WTC11 (cell line): ENCODE measurements at regions of chr17 and their contacts with region 1.

Region 1: GRCh38 chr17:2094891-2095535 is 40.1 kb downstream of the HIC1 start:
- DNase-seq: peak; percentile 35
- ATAC-seq: peak; percentile 46
- H3K4me3 Mint-ChIP-seq: no peak overlapping the region
- H3K27ac Mint-ChIP-seq: peak overlapping the region; percentile 77
- H3K4me1 Mint-ChIP-seq: peaks cover 30% of the 10 kb centered on the region
- H3K27me3 Mint-ChIP-seq: no peaks in the 10 kb centered on the region
- CTCF ChIP-seq: no peak

Region 2: GRCh38 chr17:1783834-1784611 is 311.0 kb before region 1 on chr17:
- CTCF ChIA-PET with region 1: no interaction called
- POLR2A ChIA-PET with region 1: no interaction called
- DNase-seq: no peak
- ATAC-seq: peak; percentile 86
- H3K4me3 Mint-ChIP-seq: no peak overlapping the region
- H3K27ac Mint-ChIP-seq: peak overlapping the region; percentile 69
- H3K4me1 Mint-ChIP-seq: no peaks in the 10 kb centered on the region
- H3K27me3 Mint-ChIP-seq: no peaks in the 10 kb centered on the region
- CTCF ChIP-seq: 0 out of 2 replicates have a peak, but pooled peaks have one; percentile 15

Region 3: GRCh38 chr17:1989135-1989534 is 105.9 kb before region 1 on chr17:
- CTCF ChIA-PET with region 1: no interaction called
- POLR2A ChIA-PET with region 1: no interaction called
- DNase-seq: no peak
- ATAC-seq: no peak
- H3K4me3 Mint-ChIP-seq: no peak overlapping the region
- H3K27ac Mint-ChIP-seq: no peak overlapping the region
- H3K4me1 Mint-ChIP-seq: peaks cover 10% of the 10 kb centered on the region
- H3K27me3 Mint-ChIP-seq: no peaks in the 10 kb centered on the region; the same call in 1 of the 2 replicates
- CTCF ChIP-seq: no peak

Region 4: DNA sequence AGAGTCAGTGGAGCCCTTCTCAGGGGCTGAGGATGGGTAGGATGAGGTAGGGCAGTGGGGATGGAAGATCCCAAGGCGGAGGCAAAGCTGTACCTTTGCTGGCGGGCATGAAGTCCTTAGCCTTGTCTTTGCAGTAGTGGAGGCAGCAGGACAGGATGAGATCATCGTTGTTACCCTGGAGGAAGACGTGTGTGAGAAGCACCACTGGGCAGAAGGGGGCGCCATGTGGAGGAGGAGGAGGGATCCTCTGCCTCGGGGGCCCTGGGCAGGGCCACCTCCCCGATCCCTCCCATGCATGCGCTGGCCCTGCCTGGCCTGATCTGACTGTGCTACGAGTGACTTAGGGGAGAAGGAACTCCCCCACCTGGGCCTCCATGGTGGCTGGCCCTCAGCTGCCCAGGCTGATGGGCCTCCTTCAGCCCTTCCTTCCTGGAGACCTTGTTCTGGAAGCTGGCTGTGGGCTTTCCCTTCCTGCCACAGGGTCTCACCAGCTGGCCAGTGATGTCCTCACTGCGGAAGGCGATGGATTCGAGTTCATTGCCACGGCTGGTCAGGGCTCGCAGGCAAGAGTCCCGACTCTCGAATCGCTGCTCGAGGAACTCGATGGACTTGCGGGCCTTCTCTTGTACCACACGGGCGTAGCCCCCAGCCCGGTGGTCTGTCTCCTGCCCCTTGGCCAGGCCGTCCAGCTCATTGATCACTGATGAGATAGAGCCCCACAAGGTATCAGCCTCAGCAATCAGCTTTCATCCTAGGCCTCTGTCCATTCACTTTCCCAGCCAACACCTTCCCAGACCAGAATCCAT is 29.8 kb before region 1 on chr17:
- CTCF ChIA-PET with region 1: interaction called, 18 read pairs
- POLR2A ChIA-PET with region 1: no interaction called
- DNase-seq: peak; percentile 90
- ATAC-seq: peak; percentile 85
- H3K4me3 Mint-ChIP-seq: no peak overlapping the region
- H3K27ac Mint-ChIP-seq: peak overlapping the region; percentile 74; the same call in 1 of the 2 replicates
- H3K4me1 Mint-ChIP-seq: peaks cover 31% of the 10 kb centered on the region
- H3K27me3 Mint-ChIP-seq: peaks cover 13% of the 10 kb centered on the region
- CTCF ChIP-seq: peak; percentile 65

Region 5: DNA sequence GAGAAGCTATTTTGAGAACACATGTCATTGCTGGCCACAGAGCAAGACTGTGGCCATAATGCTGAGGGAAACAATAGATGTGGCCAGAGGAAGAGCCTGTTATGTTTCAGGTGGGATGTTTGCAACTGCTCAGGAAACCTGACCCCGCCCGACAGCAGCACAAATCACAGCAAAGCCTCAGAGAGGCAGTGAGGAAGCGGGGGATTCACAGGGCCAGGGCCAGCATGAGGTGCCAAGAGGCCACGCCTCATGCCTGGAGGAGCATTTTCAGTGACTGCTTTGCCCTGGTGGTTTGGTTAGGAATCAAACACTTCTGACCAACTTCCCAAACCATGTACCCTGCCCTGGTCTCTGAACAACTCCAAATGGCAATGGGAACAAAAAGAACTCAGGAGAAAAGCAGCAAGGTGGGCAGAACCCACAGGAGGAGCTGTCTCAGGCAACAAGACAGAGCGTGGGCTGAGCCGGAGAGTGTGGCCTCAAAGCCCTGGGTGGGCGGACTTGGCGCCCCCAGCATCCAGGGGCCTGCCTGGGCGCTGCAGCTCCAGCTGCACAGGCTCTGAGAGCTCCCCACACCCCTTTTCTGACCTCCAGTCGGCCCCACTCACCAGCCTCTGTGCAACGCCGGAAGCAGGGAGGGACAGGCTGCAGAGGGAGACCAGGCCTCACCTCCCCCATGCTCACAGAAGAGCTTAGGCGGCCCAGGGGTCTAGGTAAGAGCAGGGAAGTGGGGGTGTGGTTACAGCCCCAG is 19.5 kb before region 1 on chr17:
- CTCF ChIA-PET with region 1: interaction called, 13 read pairs
- POLR2A ChIA-PET with region 1: no interaction called
- DNase-seq: peak; percentile 28
- ATAC-seq: peak; percentile 59
- H3K4me3 Mint-ChIP-seq: no peak overlapping the region
- H3K27ac Mint-ChIP-seq: peak overlapping the region; percentile 90
- H3K4me1 Mint-ChIP-seq: peaks cover 19% of the 10 kb centered on the region
- H3K27me3 Mint-ChIP-seq: no peaks in the 10 kb centered on the region
- CTCF ChIP-seq: no peak